ENCODE measurements at regions of chrX and their contacts with region 1.

Region 1: GRCh38 chrX:54182864-54183608 is at the start of gene FAM120C:
- DNase-seq: peak; percentile 64
- ATAC-seq: peak; percentile 68
- H3K4me3 ChIP-seq: peak within 1 kb of the TSS; percentile 93
- H3K27ac ChIP-seq: peak within 1 kb of the TSS; percentile 98
- H3K4me1 ChIP-seq: no peaks in the 10 kb centered on the region
- H3K27me3 ChIP-seq: no peaks in the 10 kb centered on the region
- CTCF ChIP-seq: no peak
- POLR2A ChIP-seq: peak; percentile 64; the same call in 1 of the 2 replicates
- RAD21 ChIP-seq: no peak
- total RNA-seq, gene FAM120C: 3.6 TPM in 2 replicates

Region 2: GRCh38 chrX:53683556-53684414 is 499.3 kb before region 1 on chrX:
- CTCF ChIA-PET with region 1: no interaction called
- POLR2A ChIA-PET with region 1: interaction called, 3 read pairs
- dilution Hi-C with region 1: no loop called
- in situ Hi-C with region 1: no loop called
- intact Hi-C with region 1: loop called (anchors 10 kb)
- DNase-seq: peak; percentile 98
- ATAC-seq: peak; percentile 76
- H3K4me3 ChIP-seq: peak overlapping the region; percentile 88
- H3K27ac ChIP-seq: peak overlapping the region; percentile 97
- H3K4me1 ChIP-seq: no peaks in the 10 kb centered on the region
- H3K27me3 ChIP-seq: no peaks in the 10 kb centered on the region
- CTCF ChIP-seq: 0 out of 2 replicates have a peak, but pooled peaks have one; percentile 13
- POLR2A ChIP-seq: peak; percentile 94
- RAD21 ChIP-seq: no peak

Region 3: GRCh38 chrX:54044126-54044876 is 138.7 kb before region 1 on chrX and contains the start of gene PHF8:
- CTCF ChIA-PET with region 1: no interaction called
- POLR2A ChIA-PET with region 1: no interaction called
- dilution Hi-C with region 1: no loop called
- in situ Hi-C with region 1: no loop called
- intact Hi-C with region 1: loop called (anchors 5 kb)
- DNase-seq: peak; percentile 92
- ATAC-seq: peak; percentile 88
- H3K4me3 ChIP-seq: peak within 1 kb of the TSS; percentile 100
- H3K27ac ChIP-seq: peak within 1 kb of the TSS; percentile 91
- H3K4me1 ChIP-seq: no peaks in the 10 kb centered on the region; the same call in 1 of the 2 replicates
- H3K27me3 ChIP-seq: no peaks in the 10 kb centered on the region
- CTCF ChIP-seq: no peak
- POLR2A ChIP-seq: peak; percentile 77
- RAD21 ChIP-seq: no peak
- total RNA-seq, gene PHF8: 11.4 and 15.2 TPM in 2 replicates

Region 4: DNA sequence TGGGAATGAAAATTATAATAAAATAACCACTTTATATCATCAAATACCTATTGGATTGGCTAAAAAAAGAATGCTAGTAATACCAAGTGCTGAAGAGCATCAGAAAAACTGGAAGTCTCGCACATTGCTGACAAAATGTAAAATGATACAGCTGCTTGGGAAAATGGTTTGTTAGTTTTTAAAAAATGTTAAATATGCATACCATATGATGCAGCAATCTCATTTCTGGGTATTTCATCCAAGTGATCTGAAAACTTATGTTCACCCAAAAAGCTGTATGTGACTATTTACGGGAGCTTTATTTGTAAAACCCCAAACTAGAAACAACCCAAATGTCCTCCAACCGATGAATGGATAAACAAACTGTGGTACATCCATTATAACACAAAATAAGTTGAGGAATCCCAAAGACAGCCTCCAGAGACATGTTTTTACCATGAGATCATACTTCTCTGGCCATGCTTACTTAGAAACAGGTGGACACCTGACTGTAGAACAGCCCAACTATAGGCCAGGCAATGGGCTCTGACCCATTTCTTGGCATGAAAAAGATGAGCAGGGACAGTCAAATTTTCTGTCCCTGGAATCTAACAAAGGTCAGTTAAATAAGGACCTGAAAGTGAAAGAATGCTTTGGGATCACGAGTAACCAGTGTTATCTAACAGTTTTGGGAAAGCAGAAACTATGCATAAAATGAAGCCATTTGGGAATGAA is 47.6 kb after region 1 on chrX:
- CTCF ChIA-PET with region 1: no interaction called
- POLR2A ChIA-PET with region 1: no interaction called
- dilution Hi-C with region 1: no loop called
- in situ Hi-C with region 1: no loop called
- intact Hi-C with region 1: loop called (anchors 2 kb)
- DNase-seq: peak; percentile 47
- ATAC-seq: peak; percentile 79
- H3K4me3 ChIP-seq: 0 out of 2 replicates have a peak overlapping the region, but pooled peaks have one; percentile 17
- H3K27ac ChIP-seq: peak overlapping the region; percentile 82; the same call in 1 of the 2 replicates
- H3K4me1 ChIP-seq: peaks cover 2% of the 10 kb centered on the region
- H3K27me3 ChIP-seq: no peaks in the 10 kb centered on the region
- CTCF ChIP-seq: no peak
- POLR2A ChIP-seq: no peak
- RAD21 ChIP-seq: no peak

Region 5: DNA sequence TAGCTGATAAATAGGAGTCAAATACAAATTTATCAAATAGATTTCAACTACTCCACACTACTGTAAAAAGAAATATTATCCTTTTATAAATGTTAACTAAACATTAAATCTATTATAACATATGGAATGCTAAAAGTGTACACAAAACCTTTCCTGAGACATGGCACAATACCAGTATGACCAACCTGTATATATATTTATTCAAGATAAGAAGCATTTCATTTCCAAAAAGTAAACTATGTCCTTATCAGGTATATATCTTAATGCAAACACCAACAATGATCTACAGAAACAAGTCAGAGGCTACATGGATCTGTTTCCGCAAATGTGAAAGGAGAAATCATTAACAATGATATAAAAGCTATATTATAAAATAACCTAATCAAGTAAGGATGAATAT is 137.0 kb after region 1 on chrX:
- CTCF ChIA-PET with region 1: no interaction called
- POLR2A ChIA-PET with region 1: no interaction called
- dilution Hi-C with region 1: no loop called
- in situ Hi-C with region 1: no loop called
- intact Hi-C with region 1: no loop called
- DNase-seq: no peak
- ATAC-seq: no peak
- H3K4me3 ChIP-seq: no peak overlapping the region
- H3K27ac ChIP-seq: no peak overlapping the region
- H3K4me1 ChIP-seq: no peaks in the 10 kb centered on the region
- H3K27me3 ChIP-seq: no peaks in the 10 kb centered on the region
- CTCF ChIP-seq: no peak
- POLR2A ChIP-seq: no peak
- RAD21 ChIP-seq: no peak

Region 6: GRCh38 chrX:54439967-54440871 is 257.2 kb after region 1 on chrX and contains the start of gene TSR2:
- CTCF ChIA-PET with region 1: no interaction called
- POLR2A ChIA-PET with region 1: no interaction called
- dilution Hi-C with region 1: no loop called
- in situ Hi-C with region 1: no loop called
- intact Hi-C with region 1: loop called (anchors 1 kb)
- DNase-seq: peak; percentile 87
- ATAC-seq: peak; percentile 97
- H3K4me3 ChIP-seq: peak within 1 kb of the TSS; percentile 84
- H3K27ac ChIP-seq: peak within 1 kb of the TSS; percentile 38
- H3K4me1 ChIP-seq: no peaks in the 10 kb centered on the region
- H3K27me3 ChIP-seq: peaks cover 4% of the 10 kb centered on the region; the same call in 1 of the 2 replicates
- CTCF ChIP-seq: peak; percentile 40
- POLR2A ChIP-seq: no peak
- RAD21 ChIP-seq: peak; percentile 45
- total RNA-seq, gene TSR2: 8.8 and 14.4 TPM in 2 replicates